KBM-7 (cell line): ENCODE measurements at regions of chr5 and their contacts with region 1.

Region 1: GRCh38 chr5:153964880-153965645 is 73.6 kb downstream of the FAM114A2 start:
- DNase-seq: peak; percentile 66

Region 2: DNA sequence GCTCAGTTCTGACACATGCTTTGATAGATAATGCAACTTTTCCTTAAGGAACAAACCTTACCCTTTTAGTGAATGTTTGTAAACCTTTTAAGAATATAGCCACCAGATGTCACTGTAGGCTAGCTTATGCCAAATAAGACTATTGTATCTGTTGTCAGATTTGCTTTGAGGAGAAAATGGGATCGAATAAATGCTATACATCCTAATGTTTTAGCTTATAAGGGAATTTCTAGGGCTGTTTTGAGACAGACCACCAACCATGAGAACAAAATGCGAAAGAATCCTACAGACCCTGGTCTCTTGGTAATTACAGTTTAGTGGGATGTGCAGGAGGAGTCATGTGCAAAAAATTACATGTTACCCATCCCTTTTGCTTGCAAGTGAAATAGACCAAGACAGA is 1432.3 kb before region 1 on chr5:
- in situ Hi-C with region 1: loop called (anchors 25 kb)
- DNase-seq: peak; percentile 32

Region 3: DNA sequence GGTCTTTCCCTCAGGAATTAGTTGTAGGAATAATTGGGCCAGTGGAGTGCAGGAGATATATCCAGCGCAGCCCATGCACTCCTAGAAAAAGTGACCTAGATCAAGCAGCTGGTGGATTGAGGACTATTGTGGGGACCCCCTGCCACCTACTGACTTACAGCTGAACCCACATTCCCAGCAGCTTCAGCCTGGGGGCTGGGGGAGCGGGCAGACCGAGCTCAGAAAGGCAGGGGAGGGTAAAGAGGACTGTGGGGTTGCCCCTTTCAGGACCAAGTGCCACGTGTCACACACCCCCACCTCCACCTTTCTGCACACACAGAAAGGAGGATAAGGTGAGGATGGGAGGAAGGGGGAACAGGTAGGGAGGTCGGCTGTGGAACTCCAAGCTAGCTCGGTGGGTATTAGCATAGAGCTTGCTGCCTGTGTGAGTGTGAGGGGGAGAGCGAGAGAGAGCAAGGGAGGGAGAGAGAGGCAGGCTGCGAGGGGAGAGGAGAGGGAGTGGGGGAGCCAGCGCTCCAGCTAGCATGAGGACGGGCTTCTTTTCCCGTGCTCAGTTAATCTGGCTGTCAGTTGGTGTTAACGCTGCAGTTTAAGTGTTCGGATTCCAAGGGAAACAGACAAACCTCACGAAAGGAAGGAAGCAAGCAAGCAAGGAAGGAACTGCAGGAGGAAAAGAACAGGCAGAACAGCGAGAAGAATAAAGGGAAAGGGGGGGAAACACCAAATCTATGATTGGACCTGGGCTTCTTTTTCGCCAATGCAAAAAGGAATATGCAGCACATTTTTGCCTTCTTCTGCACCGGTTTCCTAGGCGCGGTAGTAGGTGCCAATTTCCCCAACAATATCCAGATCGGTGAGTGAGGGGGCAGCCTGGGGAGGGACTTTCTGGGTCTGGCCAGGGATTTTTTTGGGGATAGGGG is 474.7 kb before region 1 on chr5 and contains the start of gene GRIA1:
- in situ Hi-C with region 1: no loop called
- DNase-seq: no peak

Region 4: GRCh38 chr5:153523831-153524230 is 441.2 kb before region 1 on chr5:
- in situ Hi-C with region 1: loop called (anchors 25 kb)
- DNase-seq: no peak

Region 5: DNA sequence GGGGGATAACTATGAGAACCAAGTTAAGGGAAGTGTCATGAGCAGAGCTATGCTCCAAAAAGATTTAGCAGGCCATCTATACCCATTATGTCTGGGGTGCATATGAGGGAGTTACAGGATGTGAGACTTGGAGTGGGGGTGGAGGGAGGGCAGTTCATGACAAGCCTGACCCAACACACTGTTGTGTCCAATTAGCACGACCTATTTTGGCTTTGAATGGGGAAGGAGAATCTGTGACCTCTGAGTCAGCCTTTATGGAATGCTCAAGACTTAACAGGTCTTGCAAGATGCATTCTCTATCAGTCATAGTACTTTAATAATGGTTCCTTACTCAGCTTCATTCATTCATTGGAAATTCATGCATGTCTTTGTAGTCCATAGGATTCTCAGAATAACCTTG is 402.9 kb before region 1 on chr5:
- in situ Hi-C with region 1: no loop called
- DNase-seq: no peak